ENCODE measurements at regions of chr19 and their contacts with region 1.

Region 1: DNA sequence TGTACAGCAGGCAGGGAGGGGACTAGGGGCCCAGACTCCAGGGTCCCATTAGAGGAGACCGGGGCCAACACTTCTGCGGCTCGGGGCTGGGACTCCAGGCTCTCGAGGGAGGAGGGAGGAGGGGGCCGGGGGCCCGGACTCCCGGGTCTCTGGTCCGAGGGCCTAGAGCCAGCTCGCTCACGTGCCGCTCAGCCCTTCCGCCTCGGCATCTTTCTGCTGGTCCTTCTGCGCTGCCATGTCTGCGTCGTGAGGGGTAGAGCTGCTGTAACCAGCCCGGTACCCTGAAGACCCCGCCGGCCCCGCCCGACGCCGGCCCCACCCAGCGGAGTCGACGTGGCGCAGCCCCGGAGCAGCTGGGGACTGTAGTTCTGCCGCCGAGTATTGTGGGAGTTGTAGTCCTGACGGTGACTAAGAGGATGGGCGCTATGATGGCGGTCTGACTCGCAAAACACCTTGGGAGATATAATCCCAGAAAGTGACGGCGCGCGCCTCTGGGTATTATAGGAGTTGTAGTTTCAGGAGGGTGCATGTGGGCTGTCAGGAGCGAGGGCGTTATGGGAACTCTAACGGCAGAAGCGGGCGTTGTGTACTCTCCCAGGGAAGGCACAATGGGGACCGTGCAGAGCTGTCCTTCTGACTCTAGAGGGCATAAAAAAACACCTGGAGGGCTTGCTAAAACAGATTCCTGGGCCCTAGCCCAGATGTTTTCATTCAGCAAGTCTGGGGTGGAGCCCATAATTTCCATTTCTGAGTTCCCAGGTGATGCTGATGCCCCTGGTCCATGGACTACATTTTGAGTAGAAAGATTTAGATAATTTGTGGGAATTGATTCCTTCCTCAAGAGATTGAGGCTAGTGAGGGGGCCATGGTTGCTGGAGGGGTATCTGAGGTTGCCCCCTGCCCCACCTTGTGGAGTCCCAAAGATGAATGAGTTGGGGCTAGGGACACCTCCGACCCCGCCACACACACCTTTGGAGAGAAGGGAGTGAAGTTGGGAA is at the start of gene RABAC1:
- DNase-seq: peak; percentile 86 to 98 (median 95)

Region 2: DNA sequence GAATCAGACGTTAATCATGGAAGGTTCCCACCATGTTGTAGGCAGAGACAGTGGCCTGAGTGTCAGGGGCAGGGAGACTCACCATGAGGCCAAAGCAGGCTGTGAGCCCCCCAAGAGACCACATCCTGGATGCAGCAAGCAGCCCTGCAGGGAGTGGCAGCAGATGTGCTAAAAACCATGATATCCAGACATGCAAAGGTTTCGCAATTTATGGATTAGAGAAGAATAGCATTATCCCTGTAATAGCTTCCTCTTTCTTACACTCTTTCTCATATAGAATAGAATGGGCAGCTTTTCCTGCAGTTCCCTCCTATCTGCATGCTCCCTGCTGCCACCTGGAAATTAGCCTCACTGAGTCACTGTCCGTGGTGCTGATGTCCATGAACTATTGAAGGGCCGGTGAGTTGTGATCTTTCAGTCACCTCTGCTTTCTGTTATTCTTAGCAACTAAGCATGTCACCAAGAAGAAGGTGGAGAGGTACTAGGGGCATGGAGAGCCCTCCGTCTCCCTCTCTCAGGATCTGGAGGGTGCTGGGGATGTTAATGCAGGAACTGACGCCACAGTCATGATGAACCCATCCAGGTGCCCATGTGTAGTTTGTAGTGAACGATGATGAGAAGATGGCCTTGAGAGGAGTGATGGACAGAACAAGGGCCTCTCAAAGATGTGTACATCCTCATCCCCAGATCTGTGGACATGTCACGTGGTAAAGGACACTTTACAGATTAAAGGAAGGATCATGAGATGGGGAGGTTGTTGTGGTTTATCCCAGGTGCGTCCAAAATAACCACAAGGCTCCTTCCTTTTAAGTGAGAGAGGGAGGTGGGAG is 342.3 kb before region 1 on chr19:
- intact Hi-C with region 1: no loop called
- DNase-seq: peak in 1 of 42 donors; percentile 37

Region 3: DNA sequence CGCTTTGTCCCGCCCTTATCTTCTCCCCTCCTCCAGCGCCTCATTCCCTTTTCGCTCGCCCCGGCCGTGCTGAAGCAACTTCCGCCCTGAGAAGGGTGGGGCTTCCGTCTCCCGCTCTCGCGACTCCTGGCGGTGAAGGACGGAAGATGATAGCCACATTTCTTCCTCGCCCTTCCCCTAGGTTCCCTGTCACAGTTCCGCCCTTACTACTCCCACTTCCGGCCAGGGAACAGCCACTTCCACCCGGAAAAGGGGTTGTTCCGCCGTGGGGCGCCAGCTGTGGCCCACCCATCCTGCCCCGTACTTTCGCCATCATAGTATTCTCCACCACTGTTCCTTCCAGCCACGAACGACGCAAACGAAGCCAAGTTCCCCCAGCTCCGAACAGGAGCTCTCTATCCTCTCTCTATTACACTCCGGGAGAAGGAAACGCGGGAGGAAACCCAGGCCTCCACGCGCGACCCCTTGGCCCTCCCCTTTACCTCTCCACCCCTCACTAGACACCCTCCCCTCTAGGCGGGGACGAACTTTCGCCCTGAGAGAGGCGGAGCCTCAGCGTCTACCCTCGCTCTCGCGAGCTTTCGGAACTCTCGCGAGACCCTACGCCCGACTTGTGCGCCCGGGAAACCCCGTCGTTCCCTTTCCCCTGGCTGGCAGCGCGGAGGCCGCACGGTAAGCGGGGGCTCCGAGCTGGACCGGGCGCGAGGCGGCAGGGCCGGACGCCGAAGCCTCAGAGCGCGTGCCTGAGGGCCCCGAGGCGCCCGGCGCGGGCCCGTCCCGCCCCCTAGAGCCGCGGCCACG is 99.5 kb before region 1 on chr19 and contains the start of gene RPS19:
- intact Hi-C with region 1: loop called (anchors 5 kb)
- DNase-seq: peak; percentile 97 to 100 (median 99)

Region 4: DNA sequence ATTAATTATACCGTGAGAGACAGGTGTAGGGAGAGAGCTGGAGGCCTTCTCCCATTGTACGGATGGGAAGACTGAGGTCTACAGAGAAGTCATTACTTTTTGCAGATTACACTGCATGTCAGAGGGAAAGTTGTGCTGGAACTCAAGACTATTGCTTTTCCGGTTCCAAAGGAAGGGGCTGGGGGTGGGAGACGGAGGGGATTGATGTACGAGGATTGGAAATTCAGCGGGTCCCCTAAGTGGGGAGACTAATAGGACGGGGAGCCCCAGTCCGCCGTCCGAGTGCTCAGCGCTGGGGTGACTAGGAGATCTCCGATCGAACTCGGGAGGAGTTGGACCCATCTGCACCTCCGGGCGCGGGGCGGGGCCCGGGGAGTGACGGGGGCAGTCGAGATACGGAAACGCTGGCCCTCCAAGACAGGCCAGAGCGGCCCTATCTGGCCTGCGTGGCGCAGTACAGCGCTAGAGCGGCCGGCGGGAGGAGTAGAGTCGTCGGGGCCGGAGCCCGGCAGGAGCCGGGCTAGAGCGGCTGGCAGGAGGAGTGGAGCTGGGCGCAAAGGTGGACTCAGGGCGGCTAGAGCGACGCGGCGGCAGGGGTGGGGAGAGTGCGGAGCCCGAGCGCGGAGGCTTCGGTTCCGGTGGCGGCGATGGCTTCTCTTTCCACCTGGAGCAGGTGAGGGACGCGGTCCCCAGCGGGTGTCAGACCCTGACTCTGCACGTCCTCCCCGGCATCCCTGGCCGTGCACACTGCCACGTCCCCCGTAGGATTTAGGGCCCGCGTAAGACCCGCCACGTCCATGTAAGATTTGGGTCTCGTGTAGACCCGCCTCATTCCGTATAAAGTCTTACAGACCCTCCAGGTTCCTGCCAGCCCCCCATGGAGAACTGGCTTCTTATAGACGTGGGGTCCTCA is 75.3 kb before region 1 on chr19:
- intact Hi-C with region 1: no loop called
- DNase-seq: peak; percentile 85 to 98 (median 95)

Region 5: GRCh38 chr19:41993612-41994483 is 34.5 kb after region 1 on chr19 and contains the start of gene ATP1A3:
- intact Hi-C with region 1: no loop called
- DNase-seq: peak in 41 of 42 donors; percentile 47 to 87 (median 75)

Region 6: DNA sequence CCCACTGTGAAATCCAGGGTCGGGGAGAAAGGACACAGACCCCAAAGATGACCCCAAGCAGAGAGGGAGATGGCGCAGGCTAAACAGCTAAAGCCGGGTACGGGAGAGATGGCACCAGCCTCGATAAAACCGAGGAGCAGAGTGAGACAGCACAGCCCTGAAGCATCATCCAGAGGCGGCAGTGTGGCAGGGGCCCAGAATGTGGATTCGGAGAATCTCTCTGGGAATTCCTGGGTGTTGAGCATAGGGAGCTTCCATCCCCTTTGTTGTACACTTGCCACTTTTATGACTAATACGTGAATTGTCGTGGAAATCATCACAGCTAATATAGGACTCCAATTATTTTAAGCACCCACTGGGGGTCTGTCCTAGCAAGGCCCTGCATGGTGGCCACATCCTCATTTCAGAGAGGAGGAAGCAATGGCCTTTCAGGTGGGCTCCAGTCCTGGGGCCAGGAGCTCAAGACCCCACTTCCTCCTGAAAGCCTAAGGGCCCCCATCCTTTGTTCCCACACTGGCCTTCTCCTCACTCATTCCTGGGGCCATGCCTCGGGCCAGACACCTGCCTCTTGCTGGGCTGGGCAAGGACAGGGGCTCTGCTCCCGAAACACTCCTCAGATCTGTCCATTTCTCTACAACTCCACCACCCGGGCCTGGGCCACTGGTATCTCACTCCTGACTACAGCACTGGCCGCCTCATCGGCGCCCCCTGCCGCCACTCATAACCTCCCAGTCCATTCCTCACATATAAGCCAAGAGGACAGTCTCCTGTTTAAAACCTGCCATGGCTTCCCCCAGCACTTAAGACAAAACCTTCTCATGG is 64.0 kb after region 1 on chr19:
- intact Hi-C with region 1: no loop called
- DNase-seq: peak in 1 of 42 donors; percentile 10